A673 (cell line): ENCODE measurements at regions of chr7 and their contacts with region 1.

Region 1: DNA sequence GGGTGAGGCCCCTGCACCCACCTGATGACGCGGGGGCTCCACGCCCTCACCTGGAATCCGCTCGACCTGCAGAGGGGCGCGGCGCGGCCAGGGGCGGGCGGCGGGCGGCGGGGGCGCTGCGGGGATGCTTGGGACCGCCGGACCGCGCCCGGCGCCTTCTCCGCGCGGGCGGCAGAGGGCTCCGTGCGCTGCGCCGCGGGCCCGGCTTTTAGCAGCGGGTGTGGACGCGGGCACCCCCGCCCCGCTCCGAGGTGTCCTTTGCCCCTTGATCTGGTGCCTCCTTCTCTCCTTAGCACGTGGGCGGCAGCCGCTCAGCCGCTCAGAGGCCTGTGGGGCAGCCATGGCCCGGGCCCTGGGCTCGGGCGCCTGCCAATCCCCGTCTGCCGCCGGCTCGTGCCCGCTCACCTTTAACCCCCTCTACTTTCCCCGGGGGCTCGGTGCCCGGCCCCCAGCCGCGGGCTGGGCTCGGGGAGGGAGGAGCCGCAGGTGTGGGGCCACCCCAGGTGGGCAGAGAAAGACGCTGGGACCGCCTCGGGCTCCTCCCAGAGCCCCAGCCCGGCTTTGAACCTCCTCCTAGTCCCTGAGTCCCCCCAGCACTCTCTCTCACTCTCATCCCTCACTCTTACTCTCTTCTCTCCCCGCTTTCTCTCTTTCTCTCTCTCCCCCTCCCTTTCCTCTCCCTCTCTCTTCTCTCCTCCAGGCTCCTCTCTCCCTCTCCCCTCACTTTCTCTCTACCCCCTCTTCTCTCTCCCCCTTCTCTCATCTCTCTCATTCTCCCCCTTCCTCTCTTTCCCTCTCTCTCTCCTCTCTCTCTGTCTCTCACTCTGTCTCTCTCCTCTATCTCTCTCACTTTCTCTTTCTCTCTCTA is 19.7 kb upstream of the VPS37D start:
- DNase-seq: no peak
- H3K4me3 ChIP-seq: peak overlapping the region; percentile 62
- H3K27ac ChIP-seq: no peak overlapping the region
- H3K4me1 ChIP-seq: peaks cover 10% of the 10 kb centered on the region
- H3K27me3 ChIP-seq: peaks cover 8% of the 10 kb centered on the region
- CTCF ChIP-seq: peak; percentile 16; the same call in 1 of the 2 replicates

Region 2: DNA sequence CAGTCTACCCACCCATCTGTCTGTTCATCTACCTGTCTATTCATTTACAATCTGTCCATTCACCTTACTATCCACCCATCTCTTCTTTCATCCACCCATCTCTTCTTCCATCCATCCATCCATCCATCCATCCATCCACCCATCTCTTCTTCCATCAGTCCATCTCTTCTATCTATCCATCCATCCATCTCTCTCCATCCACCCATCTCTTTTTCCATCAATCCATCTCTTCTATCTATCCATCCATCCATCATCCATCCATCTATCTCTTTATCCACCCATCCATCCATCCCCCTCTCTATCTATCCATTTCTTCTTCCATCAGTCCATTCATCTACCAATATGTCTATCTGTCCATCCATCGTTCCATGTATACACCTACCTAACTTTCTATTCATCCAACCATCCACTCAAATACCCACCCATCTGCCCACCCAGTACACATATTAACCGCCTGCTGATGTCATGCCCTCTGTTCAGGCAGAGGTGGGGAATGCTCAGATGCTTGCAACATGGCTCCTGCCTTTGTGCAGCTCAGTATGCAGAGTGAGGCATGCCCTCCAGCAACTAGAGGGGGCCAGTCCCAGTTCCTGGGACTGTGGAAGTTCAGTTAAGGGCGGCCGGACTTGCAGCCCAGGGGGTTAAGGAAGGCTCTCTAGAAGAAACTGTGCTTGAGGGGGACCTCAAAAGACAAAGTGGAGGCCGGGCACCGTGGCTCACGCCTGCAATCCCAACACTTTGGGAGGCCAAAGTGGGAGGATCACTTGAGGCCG is 12.3 kb before region 1 on chr7:
- CTCF ChIA-PET with region 1: no interaction called
- POLR2A ChIA-PET with region 1: interaction called, 3 read pairs
- intact Hi-C with region 1: loop called (anchors 1 kb)
- DNase-seq: no peak
- H3K4me3 ChIP-seq: no peak overlapping the region
- H3K27ac ChIP-seq: no peak overlapping the region
- H3K4me1 ChIP-seq: peaks cover 7% of the 10 kb centered on the region
- H3K27me3 ChIP-seq: no peaks in the 10 kb centered on the region
- CTCF ChIP-seq: no peak